ENCODE measurements at regions of chr7 and their contacts with region 1.

Region 1: GRCh38 chr7:94087664-94088352 is 83.7 kb upstream of the BET1 start:
- DNase-seq: no peak
- ATAC-seq: peak; percentile 92
- H3K4me3 Mint-ChIP-seq: peak overlapping the region; percentile 82
- H3K27ac Mint-ChIP-seq: peak overlapping the region; percentile 89
- H3K4me1 Mint-ChIP-seq: peaks cover 19% of the 10 kb centered on the region
- H3K27me3 Mint-ChIP-seq: no peaks in the 10 kb centered on the region
- CTCF ChIP-seq: no peak

Region 2: DNA sequence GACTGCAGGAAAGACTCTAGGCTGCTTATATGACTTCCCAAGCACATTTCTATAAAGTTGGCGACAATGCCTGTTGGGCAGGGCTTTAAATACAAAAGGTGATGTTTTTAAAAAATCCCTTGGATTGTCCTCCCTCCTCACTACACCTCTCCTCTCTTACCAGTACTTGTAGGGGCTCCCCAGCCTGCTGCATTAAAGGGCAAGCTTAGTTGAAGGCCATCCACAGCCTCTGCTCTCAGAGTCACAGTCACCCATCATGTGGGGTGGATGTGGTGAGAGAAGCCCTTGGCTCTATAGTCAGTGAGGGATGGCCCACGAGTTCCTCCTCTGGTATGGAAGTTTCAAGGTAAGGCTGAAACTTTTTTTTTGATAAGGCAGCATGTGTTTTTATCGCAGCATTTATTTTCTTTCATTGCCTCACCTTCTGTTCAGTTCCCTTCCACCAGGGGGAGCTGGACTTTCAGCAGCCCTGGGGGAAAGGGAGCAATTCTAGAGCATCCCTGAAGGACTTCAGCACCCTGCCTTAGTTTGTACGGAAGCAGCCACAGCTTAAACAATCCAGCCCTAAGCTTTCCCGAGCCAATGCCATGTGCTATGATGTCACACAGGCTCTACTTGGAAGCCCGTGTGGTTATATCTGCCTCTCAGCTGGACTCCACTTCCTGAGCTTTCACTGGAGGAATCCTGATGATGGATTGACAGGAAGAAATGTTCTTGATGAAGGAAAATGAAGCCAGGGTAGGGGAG is 645.2 kb before region 1 on chr7:
- CTCF ChIA-PET with region 1: interaction called, 6 read pairs
- POLR2A ChIA-PET with region 1: no interaction called
- intact Hi-C with region 1: loop called (anchors 5 kb)
- DNase-seq: no peak
- ATAC-seq: peak; percentile 54
- H3K4me3 Mint-ChIP-seq: no peak overlapping the region
- H3K27ac Mint-ChIP-seq: no peak overlapping the region
- H3K4me1 Mint-ChIP-seq: no peaks in the 10 kb centered on the region
- H3K27me3 Mint-ChIP-seq: peaks cover 6% of the 10 kb centered on the region
- CTCF ChIP-seq: no peak

Region 3: DNA sequence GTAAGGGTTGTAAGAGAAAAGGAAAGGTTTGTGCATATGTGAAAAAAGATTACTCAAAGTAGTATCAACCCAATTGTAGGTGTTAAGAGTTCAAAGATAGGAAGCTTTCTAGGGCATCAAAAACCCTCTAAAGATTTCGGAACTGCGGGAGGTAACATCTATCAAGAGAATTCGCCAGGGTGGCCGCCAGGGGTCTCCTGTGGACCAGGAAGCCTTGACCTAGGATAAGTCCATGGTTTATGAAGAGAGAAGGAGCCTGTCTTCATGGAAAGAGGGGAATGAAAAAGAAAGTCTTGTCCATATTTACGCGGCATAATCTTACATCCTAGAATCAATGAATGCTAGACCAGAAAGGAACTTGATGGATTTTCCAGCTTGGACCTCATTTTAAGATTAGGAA is 372.6 kb before region 1 on chr7:
- CTCF ChIA-PET with region 1: interaction called, 9 read pairs
- POLR2A ChIA-PET with region 1: no interaction called
- intact Hi-C with region 1: loop called (anchors 1 kb)
- DNase-seq: peak; percentile 14
- ATAC-seq: no peak
- H3K4me3 Mint-ChIP-seq: no peak overlapping the region
- H3K27ac Mint-ChIP-seq: no peak overlapping the region
- H3K4me1 Mint-ChIP-seq: no peaks in the 10 kb centered on the region
- H3K27me3 Mint-ChIP-seq: peaks cover 10% of the 10 kb centered on the region
- CTCF ChIP-seq: no peak

Region 4: GRCh38 chr7:93921607-93922566 is 165.9 kb before region 1 on chr7 and contains the start of gene GNG11:
- CTCF ChIA-PET with region 1: interaction called, 4 read pairs
- POLR2A ChIA-PET with region 1: no interaction called
- intact Hi-C with region 1: loop called (anchors 5 kb)
- DNase-seq: peak; percentile 42
- ATAC-seq: peak; percentile 80
- H3K4me3 Mint-ChIP-seq: peak within 1 kb of the TSS; percentile 88
- H3K27ac Mint-ChIP-seq: peak within 1 kb of the TSS; percentile 46
- H3K4me1 Mint-ChIP-seq: peaks cover 25% of the 10 kb centered on the region
- H3K27me3 Mint-ChIP-seq: peaks cover 6% of the 10 kb centered on the region
- CTCF ChIP-seq: no peak
- total RNA-seq, gene GNG11: 2.4 and 2.6 TPM in 2 replicates

Region 5: GRCh38 chr7:94050046-94050445 is 37.8 kb before region 1 on chr7:
- CTCF ChIA-PET with region 1: interaction called, 9 read pairs
- POLR2A ChIA-PET with region 1: interaction called, 3 read pairs
- intact Hi-C with region 1: loop called (anchors 1 kb)
- DNase-seq: peak; percentile 44
- ATAC-seq: peak; percentile 87
- H3K4me3 Mint-ChIP-seq: peak overlapping the region; percentile 71
- H3K27ac Mint-ChIP-seq: peak overlapping the region; percentile 97
- H3K4me1 Mint-ChIP-seq: peaks cover 77% of the 10 kb centered on the region
- H3K27me3 Mint-ChIP-seq: no peaks in the 10 kb centered on the region
- CTCF ChIP-seq: no peak

Region 6: DNA sequence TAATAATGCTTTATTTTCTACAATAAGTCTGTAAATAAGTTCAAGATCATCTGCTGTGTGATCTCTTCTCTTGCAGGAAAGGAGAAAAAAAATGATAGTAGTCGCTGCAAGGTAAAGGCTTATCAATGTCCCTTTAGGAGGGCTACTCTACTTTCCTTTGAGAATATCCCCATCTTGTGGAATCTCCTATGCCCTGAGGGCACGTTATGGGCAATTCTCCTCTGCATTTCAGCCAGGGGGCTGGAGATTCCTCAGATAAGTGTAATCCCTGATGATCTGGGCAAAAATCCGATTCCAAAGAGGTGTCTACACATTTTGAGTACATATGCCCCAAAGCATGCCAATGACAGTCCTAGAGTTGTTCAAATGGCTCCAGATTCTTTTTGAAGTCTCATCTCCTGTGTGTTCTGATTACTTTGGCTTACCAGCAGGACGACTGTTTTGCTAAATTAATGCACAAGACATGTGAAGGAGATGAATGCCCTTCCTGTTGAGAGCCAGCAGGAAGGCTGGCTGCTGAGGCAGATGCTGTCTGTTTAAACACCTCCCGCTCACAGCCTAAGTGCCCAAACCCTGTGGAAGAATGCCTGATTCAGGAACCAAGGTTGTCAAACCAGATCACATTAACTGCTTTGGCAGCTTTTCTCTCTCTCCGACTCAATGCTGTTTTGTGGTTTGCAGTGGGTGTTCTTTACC is 135.7 kb after region 1 on chr7:
- CTCF ChIA-PET with region 1: interaction called, 3 read pairs
- POLR2A ChIA-PET with region 1: no interaction called
- intact Hi-C with region 1: loop called (anchors 2 kb)
- DNase-seq: no peak
- ATAC-seq: no peak
- H3K4me3 Mint-ChIP-seq: no peak overlapping the region
- H3K27ac Mint-ChIP-seq: no peak overlapping the region
- H3K4me1 Mint-ChIP-seq: no peaks in the 10 kb centered on the region
- H3K27me3 Mint-ChIP-seq: peaks cover 3% of the 10 kb centered on the region
- CTCF ChIP-seq: no peak

Region 7: DNA sequence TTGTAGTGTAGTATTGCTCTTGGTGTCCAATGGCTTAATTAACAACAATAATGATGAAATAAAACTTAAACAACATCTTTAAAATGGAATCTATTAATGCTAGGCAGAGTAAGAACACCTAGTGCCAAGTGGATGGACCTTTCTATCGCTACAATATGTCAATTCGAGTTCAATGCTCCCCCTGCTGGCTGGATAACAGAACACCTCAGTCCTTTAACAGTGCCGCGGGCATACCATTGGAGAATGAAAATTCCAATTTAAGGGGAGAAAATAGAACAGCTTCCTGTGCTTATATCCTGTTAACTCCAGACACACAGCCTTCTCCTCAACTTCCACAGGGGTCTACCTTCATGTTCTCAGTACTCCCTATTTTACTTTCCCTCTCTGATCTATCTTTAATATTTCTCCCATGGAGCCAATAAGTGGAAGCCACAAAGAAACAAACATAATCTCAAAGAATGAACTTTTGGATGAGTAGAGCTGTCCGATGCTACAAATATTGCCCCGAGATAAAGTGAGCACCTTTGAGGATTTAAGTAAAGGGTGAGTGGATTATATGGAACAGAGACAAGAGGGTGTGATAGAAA is 348.3 kb after region 1 on chr7:
- CTCF ChIA-PET with region 1: no interaction called
- POLR2A ChIA-PET with region 1: no interaction called
- intact Hi-C with region 1: loop called (anchors 5 kb)
- DNase-seq: no peak
- ATAC-seq: peak; percentile 71
- H3K4me3 Mint-ChIP-seq: no peak overlapping the region
- H3K27ac Mint-ChIP-seq: no peak overlapping the region
- H3K4me1 Mint-ChIP-seq: no peaks in the 10 kb centered on the region
- H3K27me3 Mint-ChIP-seq: peaks cover 13% of the 10 kb centered on the region
- CTCF ChIP-seq: peak; percentile 81